ENCODE measurements at regions of chrX and their contacts with region 1.

Region 1: DNA sequence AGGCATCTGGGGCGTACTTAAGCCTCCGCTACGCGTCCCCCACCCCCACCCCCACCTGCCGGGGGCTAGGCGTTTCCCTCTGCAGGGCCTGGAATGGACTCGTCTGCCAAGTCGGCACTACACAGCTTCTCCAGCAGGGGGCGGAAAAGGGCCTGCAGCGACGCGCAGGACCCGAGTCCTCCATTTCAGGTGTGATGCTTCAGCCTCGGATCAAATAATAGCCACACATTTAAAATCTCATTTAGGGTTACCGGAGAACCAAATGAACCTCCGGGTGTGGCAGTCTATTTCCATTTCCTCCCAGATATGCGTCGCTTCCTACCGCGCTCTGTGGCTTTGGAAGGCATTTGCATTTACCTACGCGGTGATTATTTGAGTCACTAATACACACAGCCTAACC is 2.9 kb downstream of the PAK3 start:
- DNase-seq: peak; percentile 79
- ATAC-seq: peak; percentile 74
- H3K4me3 Mint-ChIP-seq: no peak overlapping the region
- H3K27ac Mint-ChIP-seq: no peak overlapping the region
- H3K4me1 Mint-ChIP-seq: peaks cover 15% of the 10 kb centered on the region
- H3K27me3 Mint-ChIP-seq: peaks cover 7% of the 10 kb centered on the region

Region 2: GRCh38 chrX:110407910-110408545 is 690.8 kb before region 1 on chrX:
- CTCF ChIA-PET with region 1: no interaction called
- POLR2A ChIA-PET with region 1: no interaction called
- intact Hi-C with region 1: no loop called
- DNase-seq: peak; percentile 43
- ATAC-seq: peak; percentile 39
- H3K4me3 Mint-ChIP-seq: no peak overlapping the region
- H3K27ac Mint-ChIP-seq: no peak overlapping the region
- H3K4me1 Mint-ChIP-seq: peaks cover 3% of the 10 kb centered on the region
- H3K27me3 Mint-ChIP-seq: no peaks in the 10 kb centered on the region

Region 3: DNA sequence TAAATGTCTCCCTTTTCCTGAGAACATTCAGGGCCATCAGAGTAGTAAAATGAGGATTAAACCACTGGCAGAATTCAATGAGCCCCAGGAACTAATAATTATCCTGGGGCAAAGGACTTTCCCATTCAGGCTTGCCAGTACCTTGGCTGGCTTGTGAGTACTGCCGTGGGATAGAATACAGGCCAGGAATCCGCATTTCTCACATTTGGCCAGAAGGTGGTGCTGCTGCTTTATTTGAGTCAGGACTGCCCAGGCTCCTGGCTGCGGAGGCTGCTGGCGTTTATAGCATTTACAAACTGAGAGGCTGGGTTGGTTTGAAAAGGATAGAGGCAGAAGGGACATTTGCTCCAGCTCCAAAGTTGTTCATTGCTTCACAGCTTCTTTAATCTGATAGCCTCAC is 648.8 kb before region 1 on chrX:
- CTCF ChIA-PET with region 1: no interaction called
- POLR2A ChIA-PET with region 1: no interaction called
- intact Hi-C with region 1: loop called in 1 of 2 experiments (anchors 5 kb)
- DNase-seq: peak; percentile 71
- ATAC-seq: peak; percentile 85
- H3K4me3 Mint-ChIP-seq: no peak overlapping the region
- H3K27ac Mint-ChIP-seq: no peak overlapping the region
- H3K4me1 Mint-ChIP-seq: no peaks in the 10 kb centered on the region
- H3K27me3 Mint-ChIP-seq: no peaks in the 10 kb centered on the region

Region 4: DNA sequence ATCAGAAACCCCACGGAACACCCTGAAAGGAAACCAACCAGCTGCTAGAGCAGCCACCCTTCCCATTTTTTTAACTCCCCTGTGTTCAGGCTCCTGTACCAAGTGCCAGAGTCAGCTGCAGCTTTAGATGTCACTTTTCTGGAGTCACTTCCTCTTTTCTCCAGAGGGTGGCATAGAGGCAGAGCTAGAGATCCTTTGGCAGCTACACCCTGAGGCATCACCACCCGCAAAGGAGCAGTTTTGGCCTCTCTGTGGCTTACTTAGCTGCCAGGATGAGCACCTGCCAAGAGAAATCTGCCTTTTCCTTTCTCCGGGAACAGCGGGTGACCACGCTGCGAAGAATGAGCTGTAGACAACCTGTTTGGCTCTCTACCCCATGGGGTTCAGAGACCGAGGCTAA is 245.3 kb before region 1 on chrX:
- CTCF ChIA-PET with region 1: no interaction called
- POLR2A ChIA-PET with region 1: no interaction called
- intact Hi-C with region 1: loop called in 1 of 2 experiments (anchors 10 kb)
- DNase-seq: no peak
- ATAC-seq: no peak
- H3K4me3 Mint-ChIP-seq: no peak overlapping the region
- H3K27ac Mint-ChIP-seq: no peak overlapping the region
- H3K4me1 Mint-ChIP-seq: no peaks in the 10 kb centered on the region
- H3K27me3 Mint-ChIP-seq: peaks cover 3% of the 10 kb centered on the region

Region 5: DNA sequence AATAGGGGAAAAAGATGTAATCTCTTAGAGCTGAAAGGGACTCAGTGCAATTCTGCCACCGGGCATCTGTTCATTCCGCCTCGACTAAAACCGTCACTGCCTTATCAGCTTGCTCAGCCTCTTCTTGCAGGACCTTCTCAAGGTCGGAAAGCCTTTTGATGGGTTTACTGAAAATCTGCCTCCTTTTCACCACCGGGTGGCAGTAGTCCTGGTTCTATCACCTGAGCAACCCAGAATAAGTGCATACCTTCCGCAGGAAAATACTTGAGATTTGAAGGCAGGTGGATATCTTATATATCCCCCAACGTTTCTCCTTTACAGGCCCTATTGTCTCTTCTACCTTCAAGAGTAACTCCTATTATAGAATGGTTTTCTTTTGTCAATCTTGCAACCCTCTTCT is 106.3 kb before region 1 on chrX:
- CTCF ChIA-PET with region 1: interaction called, 4 read pairs
- POLR2A ChIA-PET with region 1: no interaction called
- intact Hi-C with region 1: loop called (anchors 1 to 5 kb)
- DNase-seq: peak; percentile 35
- ATAC-seq: no peak
- H3K4me3 Mint-ChIP-seq: no peak overlapping the region
- H3K27ac Mint-ChIP-seq: no peak overlapping the region
- H3K4me1 Mint-ChIP-seq: no peaks in the 10 kb centered on the region
- H3K27me3 Mint-ChIP-seq: peaks cover 2% of the 10 kb centered on the region

Region 6: DNA sequence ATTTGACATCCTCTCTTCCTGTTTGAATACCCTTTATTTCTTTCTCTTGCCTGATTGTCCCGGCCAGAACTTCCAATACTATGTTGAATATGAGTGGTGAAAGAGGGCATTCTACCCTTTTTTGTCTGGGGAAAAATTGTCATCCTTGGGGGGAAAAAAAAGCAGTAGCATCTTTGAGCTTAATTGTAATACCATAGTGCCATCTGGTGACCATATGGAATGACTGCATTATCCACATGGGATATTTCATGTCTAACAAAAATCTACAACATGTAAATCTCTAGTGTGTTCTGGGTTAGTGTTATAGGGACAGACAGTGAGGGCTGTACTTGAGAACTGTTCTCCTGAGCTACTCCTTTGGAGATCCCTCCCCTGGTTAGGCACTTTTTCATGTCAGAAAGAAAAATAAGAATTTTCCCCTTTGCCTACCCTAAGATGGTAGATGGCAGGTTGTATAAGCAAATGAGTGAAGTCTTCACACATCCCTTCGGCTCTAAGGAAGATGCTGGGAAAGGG is 145.4 kb after region 1 on chrX:
- CTCF ChIA-PET with region 1: interaction called, 7 read pairs
- POLR2A ChIA-PET with region 1: no interaction called
- intact Hi-C with region 1: loop called (anchors 1 kb)
- DNase-seq: no peak
- ATAC-seq: no peak
- H3K4me3 Mint-ChIP-seq: no peak overlapping the region
- H3K27ac Mint-ChIP-seq: no peak overlapping the region
- H3K4me1 Mint-ChIP-seq: no peaks in the 10 kb centered on the region
- H3K27me3 Mint-ChIP-seq: no peaks in the 10 kb centered on the region

Region 7: GRCh38 chrX:111445486-111445885 is 346.6 kb after region 1 on chrX:
- CTCF ChIA-PET with region 1: interaction called, 4 read pairs
- POLR2A ChIA-PET with region 1: no interaction called
- intact Hi-C with region 1: loop called (anchors 1 to 5 kb)
- DNase-seq: no peak
- ATAC-seq: no peak
- H3K4me3 Mint-ChIP-seq: no peak overlapping the region
- H3K27ac Mint-ChIP-seq: no peak overlapping the region
- H3K4me1 Mint-ChIP-seq: no peaks in the 10 kb centered on the region
- H3K27me3 Mint-ChIP-seq: peaks cover 5% of the 10 kb centered on the region

Measured in activated CD4-positive, alpha-beta T cell treated with anti-CD3 and anti-CD28 coated beads for 36 hours (primary cell).